ENCODE measurements at regions of chr6 and their contacts with region 1.

Region 1: DNA sequence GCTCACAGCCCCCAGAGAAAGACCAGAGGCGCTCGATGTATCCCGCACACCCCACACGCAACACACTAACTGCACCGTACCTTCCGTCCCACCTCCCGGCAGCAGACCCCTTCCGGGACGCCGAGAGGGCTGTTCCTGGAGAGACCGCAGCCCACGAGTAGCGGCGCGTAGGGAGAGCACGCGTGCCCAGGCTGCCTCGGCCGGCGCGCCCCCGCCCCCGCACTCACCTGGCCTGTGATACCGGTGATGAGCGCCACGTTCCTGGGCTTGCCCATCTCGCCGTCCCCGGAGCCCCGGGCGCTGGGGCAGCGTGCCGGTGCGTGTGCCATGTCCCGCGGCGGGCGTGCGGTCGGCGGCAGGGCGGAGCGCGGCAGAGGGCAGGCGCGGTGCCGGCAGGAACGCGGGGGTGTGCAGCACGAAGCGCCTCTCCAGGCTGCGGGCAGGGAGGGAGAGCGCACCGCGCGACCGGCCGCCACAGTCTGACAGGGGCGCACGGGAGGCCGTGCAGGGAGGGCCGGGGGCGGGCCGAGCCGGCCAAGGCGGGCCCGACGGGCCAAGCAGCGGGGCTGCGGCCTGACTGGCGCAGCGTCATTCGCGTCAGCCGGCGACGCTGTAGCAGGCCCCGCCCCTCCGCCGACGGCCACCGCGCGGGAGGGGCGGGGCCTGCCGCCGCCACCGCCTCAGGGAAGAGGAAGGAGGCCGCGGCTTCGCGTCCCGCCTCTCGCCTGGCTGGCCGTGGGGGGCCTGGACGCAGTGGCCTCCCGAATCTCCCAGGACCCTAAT is at the start of gene GMDS:
- DNase-seq: peak; percentile 80 to 91 (median 87)
- H3K4me3 ChIP-seq: peak within 1 kb of the TSS; percentile 77
- H3K27ac ChIP-seq: peak within 1 kb of the TSS; percentile 59 to 69
- H3K4me1 ChIP-seq: peaks cover 6% of the 10 kb centered on the region
- H3K27me3 ChIP-seq: no peaks in the 10 kb centered on the region
- CTCF ChIP-seq: peak in 2 of 3 donors; percentile 21 to 22
- EP300 ChIP-seq: no peak
- POLR2A ChIP-seq: peak; percentile 63
- total RNA-seq, gene GMDS: 6.6 to 15.9 (median 11.0) TPM

Region 2: GRCh38 chr6:2579241-2579761 is 334.0 kb after region 1 on chr6:
- intact Hi-C with region 1: no loop called
- DNase-seq: no peak
- H3K4me3 ChIP-seq: no peak overlapping the region
- H3K27ac ChIP-seq: no peak overlapping the region
- H3K4me1 ChIP-seq: no peaks in the 10 kb centered on the region
- H3K27me3 ChIP-seq: no peaks in the 10 kb centered on the region
- CTCF ChIP-seq: no peak
- EP300 ChIP-seq: no peak
- POLR2A ChIP-seq: no peak

Region 3: DNA sequence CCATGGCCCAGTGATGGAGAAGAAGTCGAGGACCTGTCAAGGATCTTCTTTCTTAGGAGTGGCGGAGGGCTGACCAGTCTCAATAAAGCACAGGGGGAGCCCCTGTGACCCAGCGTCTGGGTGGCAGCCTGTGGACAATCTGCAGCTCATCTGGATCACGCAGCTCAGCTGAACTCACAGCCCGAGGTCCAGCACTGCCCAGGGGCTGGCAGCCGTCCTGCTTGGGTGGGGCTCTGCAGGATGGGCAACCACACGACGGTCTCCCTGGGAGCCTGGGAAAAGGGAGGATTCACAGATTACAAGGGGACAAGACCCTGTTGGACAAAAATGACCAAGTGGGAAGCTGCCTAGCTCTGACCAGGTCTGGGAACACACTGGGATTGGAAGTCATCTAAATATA is 394.6 kb after region 1 on chr6:
- intact Hi-C with region 1: loop called in 1 of 4 experiments (anchors 5 kb)
- DNase-seq: no peak
- H3K4me3 ChIP-seq: no peak overlapping the region
- H3K27ac ChIP-seq: no peak overlapping the region
- H3K4me1 ChIP-seq: no peaks in the 10 kb centered on the region
- H3K27me3 ChIP-seq: no peaks in the 10 kb centered on the region
- CTCF ChIP-seq: no peak
- EP300 ChIP-seq: no peak
- POLR2A ChIP-seq: no peak

Region 4: DNA sequence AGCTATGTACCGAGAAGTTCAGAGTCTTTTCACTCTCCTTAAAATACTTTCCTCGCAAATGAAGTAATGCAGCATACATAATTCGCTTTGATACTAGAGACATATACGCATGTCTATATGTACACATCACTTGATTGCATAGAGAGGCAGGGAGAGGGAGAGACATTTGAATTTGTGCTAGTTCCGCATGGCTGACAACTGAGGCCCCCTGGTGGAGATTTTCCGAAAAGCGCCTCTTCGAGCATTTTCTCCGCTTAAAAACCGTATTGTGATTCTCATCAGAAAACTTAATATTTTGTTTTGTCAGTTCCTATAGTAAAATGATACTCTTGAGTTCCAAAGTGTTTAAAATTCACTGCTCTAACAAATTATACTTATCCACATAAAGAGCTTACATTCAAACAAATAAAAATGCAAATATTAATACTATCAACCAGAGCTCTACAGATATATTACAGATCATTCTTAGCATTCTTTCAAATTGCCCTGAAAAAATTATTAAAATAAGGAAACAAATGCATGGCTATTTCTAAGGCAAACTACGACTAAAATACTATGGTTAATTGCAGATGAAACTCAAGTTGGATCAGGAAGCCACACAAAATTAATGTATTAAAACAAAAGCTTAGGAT is 504.8 kb after region 1 on chr6:
- intact Hi-C with region 1: loop called in 1 of 4 experiments (anchors 10 kb)
- DNase-seq: peak in 4 of 5 donors; percentile 57 to 69 (median 67)
- H3K4me3 ChIP-seq: no peak overlapping the region
- H3K27ac ChIP-seq: no peak overlapping the region
- H3K4me1 ChIP-seq: no peaks in the 10 kb centered on the region
- H3K27me3 ChIP-seq: no peaks in the 10 kb centered on the region
- CTCF ChIP-seq: peak; percentile 56 to 62 (median 60)
- EP300 ChIP-seq: no peak
- POLR2A ChIP-seq: no peak

Region 5: GRCh38 chr6:2765166-2765895 is 520.0 kb after region 1 on chr6 and contains the start of gene WRNIP1:
- intact Hi-C with region 1: loop called in 1 of 4 experiments (anchors 10 kb)
- DNase-seq: peak; percentile 98 to 99 (median 99)
- H3K4me3 ChIP-seq: peak within 1 kb of the TSS; percentile 53
- H3K27ac ChIP-seq: peak within 1 kb of the TSS; percentile 70 to 95
- H3K4me1 ChIP-seq: peaks cover 11% of the 10 kb centered on the region
- H3K27me3 ChIP-seq: no peaks in the 10 kb centered on the region
- CTCF ChIP-seq: peak; percentile 64 to 94 (median 93)
- EP300 ChIP-seq: no peak
- POLR2A ChIP-seq: peak; percentile 60
- total RNA-seq, gene WRNIP1: 30.4 to 73.4 (median 34.6) TPM

Measured in ovary (tissue), 10 donors.